Endothelial cell of umbilical vein (primary cell): ENCODE measurements at regions of chr2 and their contacts with region 1.

Region 1: GRCh38 chr2:68251187-68251854 is 1.0 kb downstream of the PPP3R1 start:
- DNase-seq: peak; percentile 85
- H3K4me3 ChIP-seq: peak overlapping the region; percentile 55 to 98 (median 88)
- H3K27ac ChIP-seq: peak overlapping the region; percentile 82
- H3K4me1 ChIP-seq: peaks cover 38% of the 10 kb centered on the region
- H3K27me3 ChIP-seq: no peaks in the 10 kb centered on the region
- CTCF ChIP-seq: peak; percentile 63
- POLR2A ChIP-seq: no peak

Region 2: GRCh38 chr2:68157402-68158133 is 93.8 kb before region 1 on chr2 and contains the start of gene PNO1:
- CTCF ChIA-PET with region 1: interaction called, 10 read pairs
- POLR2A ChIA-PET with region 1: no interaction called
- dilution Hi-C with region 1: no loop called
- intact Hi-C with region 1: loop called (anchors 1 kb)
- DNase-seq: peak; percentile 96
- H3K4me3 ChIP-seq: peak within 1 kb of the TSS; percentile 66 to 99 (median 89)
- H3K27ac ChIP-seq: peak within 1 kb of the TSS; percentile 83
- H3K4me1 ChIP-seq: peaks cover 21% of the 10 kb centered on the region
- H3K27me3 ChIP-seq: no peaks in the 10 kb centered on the region
- CTCF ChIP-seq: peak in 1 of 2 donors; percentile 8
- POLR2A ChIP-seq: peak; percentile 47
- total RNA-seq, gene PNO1: 19.9 and 25.6 TPM in 2 replicates

Region 3: DNA sequence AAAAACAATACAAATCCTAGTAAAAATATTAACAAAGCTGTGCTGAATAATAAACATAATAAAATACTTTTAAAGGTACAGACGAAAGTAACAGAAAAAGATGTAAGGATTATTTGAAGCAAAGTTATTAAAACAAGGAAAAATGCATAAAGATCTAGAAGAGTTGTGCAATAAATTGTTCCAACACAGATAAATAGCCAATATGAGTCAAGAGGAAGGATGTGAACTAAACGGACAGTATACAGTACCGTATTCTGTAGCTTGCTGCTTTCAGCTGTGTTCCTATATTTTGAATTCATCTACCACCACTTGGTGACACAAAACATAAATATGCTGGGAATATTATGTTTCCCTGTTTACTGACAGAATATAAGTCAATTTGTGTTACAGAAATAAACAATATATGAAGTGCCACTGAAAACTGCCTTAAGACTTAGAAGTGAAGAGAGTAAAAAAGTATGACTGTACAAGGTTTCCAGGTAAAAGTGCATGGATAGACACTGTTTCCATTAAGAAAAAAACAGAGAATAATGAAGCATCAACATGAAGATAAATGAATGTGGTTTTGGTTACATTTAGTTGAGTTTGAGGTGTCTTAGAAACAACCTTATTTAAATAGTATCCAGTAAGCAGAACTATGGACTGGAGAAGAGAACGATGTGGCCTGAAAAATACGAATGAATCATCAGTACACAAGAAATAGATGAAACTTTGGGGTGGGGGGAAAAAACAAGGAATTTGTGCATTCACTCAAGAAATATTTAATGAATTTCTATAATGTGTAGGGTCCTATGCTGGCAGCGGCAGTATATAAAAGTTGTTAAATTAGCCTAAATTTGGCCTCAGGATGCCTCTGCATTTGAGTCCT is 12.1 kb before region 1 on chr2:
- CTCF ChIA-PET with region 1: interaction called, 8 read pairs
- POLR2A ChIA-PET with region 1: no interaction called
- dilution Hi-C with region 1: no loop called
- intact Hi-C with region 1: loop called (anchors 1 kb)
- DNase-seq: peak; percentile 44
- H3K4me3 ChIP-seq: peak overlapping the region in 1 of 3 experiments; percentile 25
- H3K27ac ChIP-seq: peak overlapping the region; percentile 40
- H3K4me1 ChIP-seq: peaks cover 40% of the 10 kb centered on the region
- H3K27me3 ChIP-seq: no peaks in the 10 kb centered on the region
- CTCF ChIP-seq: no peak
- POLR2A ChIP-seq: no peak

Region 4: DNA sequence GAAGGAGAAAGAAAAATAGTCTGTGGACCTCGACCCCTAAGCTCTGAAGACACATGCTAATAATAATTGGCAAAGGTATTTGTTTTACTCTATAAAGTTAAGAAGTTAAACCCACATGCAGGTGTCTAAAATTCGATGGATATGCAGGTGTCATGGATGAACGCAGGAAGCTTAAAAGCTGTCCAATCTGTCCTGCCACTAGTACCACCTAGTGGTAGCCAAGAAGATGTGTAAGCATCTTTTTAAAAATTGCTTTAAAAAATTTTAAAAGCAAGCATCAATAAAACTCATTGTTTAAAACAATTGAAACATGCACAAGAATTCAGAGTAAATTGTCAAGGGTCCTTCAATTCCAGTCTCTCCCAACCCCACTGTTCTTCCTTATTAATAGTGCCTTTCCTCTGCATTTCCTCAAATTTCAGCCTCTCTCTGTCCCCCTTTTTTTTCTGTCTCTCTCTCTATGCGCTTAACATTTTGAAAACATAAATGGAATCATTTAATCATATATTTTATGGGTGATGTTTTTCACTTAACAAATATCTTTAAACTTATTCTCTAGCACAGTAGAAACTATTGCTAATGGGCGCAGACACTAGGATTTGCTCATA is 31.6 kb after region 1 on chr2:
- CTCF ChIA-PET with region 1: interaction called, 10 read pairs
- POLR2A ChIA-PET with region 1: interaction called, 3 read pairs
- dilution Hi-C with region 1: no loop called
- intact Hi-C with region 1: loop called (anchors 1 kb)
- DNase-seq: peak; percentile 35
- H3K4me3 ChIP-seq: no peak overlapping the region
- H3K27ac ChIP-seq: no peak overlapping the region
- H3K4me1 ChIP-seq: no peaks in the 10 kb centered on the region
- H3K27me3 ChIP-seq: no peaks in the 10 kb centered on the region
- CTCF ChIP-seq: peak; percentile 43 to 61
- POLR2A ChIP-seq: no peak

Region 5: GRCh38 chr2:68319398-68320117 is 68.2 kb after region 1 on chr2 and contains the start of gene CNRIP1:
- CTCF ChIA-PET with region 1: interaction called, 7 read pairs
- POLR2A ChIA-PET with region 1: interaction called, 20 read pairs
- dilution Hi-C with region 1: no loop called
- intact Hi-C with region 1: loop called (anchors 1 kb)
- DNase-seq: peak; percentile 94
- H3K4me3 ChIP-seq: peak within 1 kb of the TSS; percentile 60 to 83 (median 79)
- H3K27ac ChIP-seq: peak within 1 kb of the TSS; percentile 99
- H3K4me1 ChIP-seq: peaks cover 22% of the 10 kb centered on the region
- H3K27me3 ChIP-seq: no peaks in the 10 kb centered on the region
- CTCF ChIP-seq: no peak
- POLR2A ChIP-seq: no peak
- total RNA-seq, gene CNRIP1: 73.8 and 74.6 TPM in 2 replicates